PC-9 (cell line): ENCODE measurements at regions of chr13 and their contacts with region 1.

Region 1: DNA sequence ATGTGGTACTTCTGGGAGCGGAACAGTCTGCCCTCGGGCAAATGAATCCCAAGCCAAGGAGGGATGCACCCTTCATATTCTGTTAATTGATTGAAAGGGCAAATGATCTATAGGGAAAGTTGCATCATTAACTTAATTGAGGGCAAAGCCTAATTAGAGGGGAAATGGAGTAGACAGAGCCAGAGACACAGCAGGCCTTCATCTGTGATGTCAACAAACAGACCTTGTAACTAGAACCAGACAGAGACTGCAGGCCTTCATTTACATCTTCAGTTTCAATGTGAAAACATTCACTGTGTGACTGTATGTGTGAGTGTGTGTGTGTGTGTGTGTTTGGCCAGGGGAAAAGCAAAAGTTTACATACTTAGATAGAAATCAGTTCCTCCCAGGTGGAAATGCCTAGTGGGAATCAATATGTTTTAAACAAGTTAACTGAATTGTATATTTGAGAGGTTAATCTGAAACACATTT is 126.4 kb downstream of the SPRY2 start:
- DNase-seq: no peak
- H3K4me3 ChIP-seq: no peak overlapping the region
- H3K27ac ChIP-seq: no peak overlapping the region
- H3K4me1 ChIP-seq: no peaks in the 10 kb centered on the region
- H3K27me3 ChIP-seq: no peaks in the 10 kb centered on the region
- CTCF ChIP-seq: no peak

Region 2: GRCh38 chr13:79973533-79973963 is 241.0 kb before region 1 on chr13:
- CTCF ChIA-PET with region 1: no interaction called
- POLR2A ChIA-PET with region 1: no interaction called
- intact Hi-C with region 1: no loop called
- DNase-seq: no peak
- H3K4me3 ChIP-seq: no peak overlapping the region
- H3K27ac ChIP-seq: no peak overlapping the region
- H3K4me1 ChIP-seq: 0 out of 2 replicates have a peak, but pooled peaks cover 3% of the 10 kb centered on the region
- H3K27me3 ChIP-seq: no peaks in the 10 kb centered on the region
- CTCF ChIP-seq: peak; percentile 80

Region 3: DNA sequence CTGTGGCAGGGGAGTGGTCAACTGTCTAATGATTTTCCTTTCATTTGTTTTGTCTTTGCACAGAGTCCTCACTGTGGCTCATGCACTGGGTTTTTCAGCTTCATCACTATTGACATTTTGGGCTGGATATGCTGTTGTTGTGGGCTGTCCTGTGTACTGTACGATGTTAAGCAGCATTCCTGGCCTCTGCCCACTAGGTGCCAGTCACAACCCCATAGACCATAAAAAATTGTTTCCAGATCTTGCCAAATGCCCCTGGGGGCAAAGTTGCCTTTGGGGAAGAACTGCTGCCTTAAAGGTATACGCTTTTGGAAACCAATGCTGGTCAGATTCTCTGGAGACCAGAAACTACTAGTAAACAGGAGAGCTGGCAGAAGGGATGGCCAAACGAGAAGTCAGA is 184.1 kb before region 1 on chr13:
- CTCF ChIA-PET with region 1: no interaction called
- POLR2A ChIA-PET with region 1: no interaction called
- intact Hi-C with region 1: loop called (anchors 10 kb)
- DNase-seq: peak; percentile 77 to 80
- H3K4me3 ChIP-seq: no peak overlapping the region
- H3K27ac ChIP-seq: no peak overlapping the region
- H3K4me1 ChIP-seq: peaks cover 10% of the 10 kb centered on the region
- H3K27me3 ChIP-seq: no peaks in the 10 kb centered on the region
- CTCF ChIP-seq: peak; percentile 58

Region 4: GRCh38 chr13:80048802-80049201 is 165.8 kb before region 1 on chr13:
- CTCF ChIA-PET with region 1: no interaction called
- POLR2A ChIA-PET with region 1: interaction called, 10 read pairs
- intact Hi-C with region 1: no loop called
- DNase-seq: peak; percentile 39 to 47
- H3K4me3 ChIP-seq: no peak overlapping the region
- H3K27ac ChIP-seq: no peak overlapping the region
- H3K4me1 ChIP-seq: 0 out of 2 replicates have a peak, but pooled peaks cover 9% of the 10 kb centered on the region
- H3K27me3 ChIP-seq: no peaks in the 10 kb centered on the region
- CTCF ChIP-seq: no peak

Region 5: DNA sequence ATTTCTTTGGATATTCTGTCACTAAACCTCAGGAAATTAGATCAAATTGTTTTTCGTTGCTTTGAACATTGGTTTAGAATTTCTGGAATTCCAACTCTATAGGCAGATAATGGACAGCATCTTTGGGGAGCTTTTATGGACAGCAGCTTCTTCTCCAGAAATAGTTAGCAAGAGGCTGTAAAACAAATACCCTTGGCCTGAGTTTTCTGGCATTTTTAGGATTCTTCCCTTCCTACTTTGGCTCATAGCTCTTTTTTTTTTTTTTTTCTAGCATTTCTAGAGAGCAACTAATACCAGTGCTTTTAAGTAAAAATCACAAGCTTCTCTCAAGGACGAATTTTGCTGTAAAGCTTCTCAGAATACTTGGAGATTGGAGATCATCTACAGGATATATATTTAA is 296.1 kb after region 1 on chr13:
- CTCF ChIA-PET with region 1: no interaction called
- POLR2A ChIA-PET with region 1: no interaction called
- intact Hi-C with region 1: no loop called
- DNase-seq: no peak
- H3K4me3 ChIP-seq: no peak overlapping the region
- H3K27ac ChIP-seq: no peak overlapping the region
- H3K4me1 ChIP-seq: no peaks in the 10 kb centered on the region
- H3K27me3 ChIP-seq: no peaks in the 10 kb centered on the region
- CTCF ChIP-seq: no peak